Posterior vena cava (tissue), 2 donors: ENCODE measurements at regions of chr19 and their contacts with region 1.

Region 1: DNA sequence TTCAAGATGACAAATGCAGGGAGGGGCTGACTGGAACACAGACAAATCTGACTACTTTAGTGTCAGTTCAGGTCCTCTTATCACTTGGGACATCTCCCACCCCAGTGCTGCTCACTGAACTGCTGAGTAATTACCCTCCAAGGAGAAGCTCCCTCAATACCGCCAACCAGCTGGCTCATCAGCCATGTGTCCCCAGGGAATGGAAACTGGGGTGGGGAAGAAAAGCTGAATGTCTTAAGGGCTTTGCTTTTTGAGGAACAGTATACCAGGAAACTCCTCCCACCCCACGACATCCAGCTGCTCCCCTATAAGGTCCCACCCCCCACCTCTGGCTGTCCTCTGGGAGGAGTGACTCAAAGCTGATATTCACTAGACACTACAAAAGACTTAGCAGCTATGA is 2.0 kb downstream of the ZNF823 start:
- DNase-seq: peak; percentile 83

Region 2: DNA sequence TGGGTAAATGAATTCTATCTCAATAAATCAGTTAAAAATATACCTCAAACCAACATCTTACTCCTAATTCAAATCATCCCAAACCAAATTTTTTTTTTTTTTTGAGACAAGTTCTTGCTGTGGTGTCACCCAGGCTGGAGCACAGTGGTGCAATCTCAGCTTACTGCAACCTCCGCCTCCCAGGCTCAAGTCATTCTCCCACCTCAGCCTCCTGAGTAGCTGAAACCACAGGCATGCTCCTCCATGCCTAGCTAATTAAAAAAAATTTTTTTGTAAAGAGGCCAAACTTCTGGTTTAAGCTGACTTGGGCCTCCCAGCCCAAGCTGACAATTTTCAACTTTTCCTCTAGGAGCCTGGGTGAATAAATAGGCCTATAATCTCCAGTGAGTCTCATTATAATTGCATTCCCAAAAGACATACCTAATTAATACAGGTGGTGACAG is 1778.3 kb before region 1 on chr19:
- intact Hi-C with region 1: no loop called
- DNase-seq: no peak

Region 3: GRCh38 chr19:11558881-11559828 is 177.5 kb before region 1 on chr19 and contains the start of gene ELOF1:
- intact Hi-C with region 1: no loop called
- DNase-seq: peak; percentile 99
- total RNA-seq, gene ELOF1: 23.2 to 36.9 TPM

Region 4: DNA sequence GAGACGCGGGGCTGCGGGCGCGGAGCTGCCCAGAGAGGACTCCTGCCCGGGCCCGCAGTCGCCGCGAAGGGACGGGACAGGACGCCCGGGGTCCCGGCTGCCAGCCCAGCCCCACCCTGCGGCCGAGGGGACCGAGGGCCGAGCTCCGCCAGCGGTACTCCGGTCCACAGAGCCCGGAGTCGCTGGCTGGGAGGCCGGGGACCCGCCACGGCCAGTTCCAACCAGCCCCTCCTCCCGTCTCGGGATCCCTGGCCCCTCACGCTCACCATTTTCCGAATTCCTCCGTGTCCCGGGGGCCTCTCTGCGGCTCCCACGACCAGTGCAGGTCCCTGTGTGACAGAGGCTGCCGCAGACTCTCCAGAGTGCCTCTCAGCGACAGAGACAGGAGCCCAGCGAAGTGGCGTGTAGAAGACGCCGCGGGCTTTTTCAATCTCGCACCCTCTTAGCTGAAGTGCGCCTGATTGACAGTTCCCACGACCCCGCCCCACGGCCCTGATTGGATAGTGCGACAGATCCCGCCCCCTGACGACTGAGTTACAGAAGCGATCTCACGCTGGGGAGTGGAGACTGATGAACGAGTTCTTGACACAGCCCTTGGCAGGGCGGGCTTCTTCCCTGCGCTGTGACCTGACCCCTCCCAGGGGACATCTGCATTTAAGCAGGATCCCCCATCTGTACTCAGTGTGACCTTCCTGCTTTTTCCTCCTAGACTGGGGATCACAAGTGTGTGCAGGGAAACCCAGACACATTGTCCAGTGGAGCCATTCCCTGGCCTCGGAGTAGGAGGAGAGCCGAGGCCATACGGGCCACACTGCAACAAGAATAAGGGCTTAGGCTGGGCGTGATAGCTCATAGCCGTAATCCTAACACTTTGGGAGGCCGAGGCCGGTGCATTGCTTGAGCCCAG is 41.9 kb before region 1 on chr19:
- intact Hi-C with region 1: loop called in 1 of 2 experiments (anchors 1 kb)
- DNase-seq: peak; percentile 98

Region 5: GRCh38 chr19:11942843-11943108 is 206.1 kb after region 1 on chr19:
- intact Hi-C with region 1: no loop called
- DNase-seq: no peak

Region 6: GRCh38 chr19:13069415-13070359 is 1333.0 kb after region 1 on chr19:
- intact Hi-C with region 1: no loop called
- DNase-seq: no peak